ENCODE measurements at regions of chr7 and their contacts with region 1.

Region 1: GRCh38 chr7:51366930-51367613 is 50.5 kb upstream of the COBL start:
- DNase-seq: no peak
- H3K4me3 ChIP-seq: no peak overlapping the region
- H3K27ac ChIP-seq: no peak overlapping the region
- H3K4me1 ChIP-seq: peaks cover 0 to 7% (median 0%) of the 10 kb centered on the region in 3 donors
- H3K27me3 ChIP-seq: no peaks in the 10 kb centered on the region
- CTCF ChIP-seq: peak in 5 of 6 experiments; percentile 50 to 69 (median 57)
- POLR2A ChIP-seq: no peak

Region 2: DNA sequence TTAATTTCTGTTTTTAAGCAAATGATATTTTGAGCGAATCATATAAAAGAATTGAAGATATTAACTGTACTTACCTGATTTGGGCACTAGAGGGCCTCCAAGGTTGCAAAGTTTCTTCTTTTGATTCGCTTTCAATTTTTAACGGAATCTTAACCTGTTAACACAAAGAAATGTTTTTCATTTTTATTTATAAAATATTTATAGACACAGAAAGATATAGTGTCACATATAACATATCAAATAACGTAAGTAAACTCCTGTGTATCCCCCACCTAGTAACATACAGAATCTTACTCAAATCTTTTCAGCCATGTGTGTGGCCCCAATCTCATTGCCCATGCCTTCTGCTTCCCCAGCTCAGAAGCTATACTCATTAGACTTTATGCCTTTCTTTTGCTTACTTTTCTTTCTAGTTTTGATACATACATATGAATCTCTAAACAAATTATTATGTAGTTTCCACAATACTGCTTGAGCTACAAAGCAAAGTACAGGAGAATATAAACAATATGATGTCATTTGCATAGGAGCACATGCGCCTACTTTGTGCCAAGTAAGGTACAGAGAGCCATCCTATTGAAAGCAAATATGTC is 1224.6 kb before region 1 on chr7:
- intact Hi-C with region 1: loop called (anchors 5 kb)
- DNase-seq: no peak
- H3K4me3 ChIP-seq: no peak overlapping the region
- H3K27ac ChIP-seq: no peak overlapping the region
- H3K4me1 ChIP-seq: no peaks in the 10 kb centered on the region
- H3K27me3 ChIP-seq: peaks cover 0 to 5% (median 0%) of the 10 kb centered on the region in 4 donors
- CTCF ChIP-seq: peak; percentile 43 to 68 (median 64)
- POLR2A ChIP-seq: no peak

Region 3: GRCh38 chr7:51151455-51151854 is 215.6 kb before region 1 on chr7:
- intact Hi-C with region 1: no loop called
- DNase-seq: no peak
- H3K4me3 ChIP-seq: no peak overlapping the region
- H3K27ac ChIP-seq: peak overlapping the region in 1 of 4 donors; percentile 39
- H3K4me1 ChIP-seq: no peaks in the 10 kb centered on the region
- H3K27me3 ChIP-seq: no peaks in the 10 kb centered on the region
- CTCF ChIP-seq: no peak
- POLR2A ChIP-seq: no peak

Region 4: DNA sequence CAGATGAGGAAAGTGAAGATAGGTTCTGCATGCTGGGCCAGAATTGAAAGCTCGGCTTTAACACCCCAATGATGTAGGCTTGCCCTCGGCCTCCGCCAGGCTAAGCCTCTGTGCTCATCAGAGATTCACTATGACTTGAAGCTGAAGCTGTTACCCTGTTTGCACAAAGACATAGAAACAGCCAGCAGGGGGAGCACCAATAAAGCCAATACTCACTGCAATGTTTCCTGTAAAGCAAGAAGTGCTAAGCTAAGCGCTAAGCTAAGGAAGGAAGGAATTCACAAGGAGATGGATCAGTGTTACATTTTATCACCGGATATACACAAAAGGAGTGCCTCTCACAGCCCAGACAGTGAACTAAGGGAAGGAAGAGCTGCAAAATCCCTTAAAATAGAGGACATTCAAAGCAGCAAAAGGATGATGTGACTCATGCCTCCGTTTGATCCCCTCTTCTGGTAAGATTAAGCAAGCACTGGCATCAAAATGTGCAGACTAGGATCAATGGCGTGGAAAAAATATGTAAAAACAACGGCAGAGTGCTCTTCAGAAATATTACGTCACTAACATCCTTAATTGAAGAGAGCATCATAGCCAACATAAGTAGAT is 204.2 kb before region 1 on chr7:
- intact Hi-C with region 1: loop called (anchors 5 kb)
- DNase-seq: no peak
- H3K4me3 ChIP-seq: no peak overlapping the region
- H3K27ac ChIP-seq: no peak overlapping the region
- H3K4me1 ChIP-seq: peaks cover 0 to 15% (median 2%) of the 10 kb centered on the region in 3 donors
- H3K27me3 ChIP-seq: peaks cover 0 to 6% (median 0%) of the 10 kb centered on the region in 4 donors
- CTCF ChIP-seq: peak; percentile 54 to 83 (median 80)
- POLR2A ChIP-seq: no peak

Region 5: GRCh38 chr7:51299391-51300133 is 67.5 kb before region 1 on chr7:
- intact Hi-C with region 1: loop called (anchors 10 kb)
- DNase-seq: no peak
- H3K4me3 ChIP-seq: no peak overlapping the region
- H3K27ac ChIP-seq: no peak overlapping the region
- H3K4me1 ChIP-seq: peaks cover 0 to 16% (median 0%) of the 10 kb centered on the region in 3 donors
- H3K27me3 ChIP-seq: no peaks in the 10 kb centered on the region
- CTCF ChIP-seq: peak in 1 of 6 experiments; percentile 7
- POLR2A ChIP-seq: no peak

Region 6: GRCh38 chr7:51430480-51431086 is 63.5 kb after region 1 on chr7:
- intact Hi-C with region 1: no loop called
- DNase-seq: no peak
- H3K4me3 ChIP-seq: no peak overlapping the region
- H3K27ac ChIP-seq: no peak overlapping the region
- H3K4me1 ChIP-seq: no peaks in the 10 kb centered on the region
- H3K27me3 ChIP-seq: peaks cover 0 to 8% (median 0%) of the 10 kb centered on the region in 4 donors
- CTCF ChIP-seq: peak; percentile 26 to 80 (median 66)
- POLR2A ChIP-seq: no peak